Activated naive CD4-positive, alpha-beta T cell treated with anti-CD3 and anti-CD28 coated beads for 36 hours (primary cell): ENCODE measurements at regions of chr4 and their contacts with region 1.

Region 1: GRCh38 chr4:74675673-74676279 is 118.5 kb downstream of the BTC start:
- DNase-seq: peak; percentile 19
- H3K4me3 Mint-ChIP-seq: no peak overlapping the region
- H3K27ac Mint-ChIP-seq: no peak overlapping the region
- H3K4me1 Mint-ChIP-seq: peaks cover 4% of the 10 kb centered on the region
- H3K27me3 Mint-ChIP-seq: peaks cover 5% of the 10 kb centered on the region

Region 2: GRCh38 chr4:74189331-74190043 is 486.3 kb before region 1 on chr4:
- CTCF ChIA-PET with region 1: no interaction called
- intact Hi-C with region 1: loop called (anchors 1 kb)
- DNase-seq: no peak
- H3K4me3 Mint-ChIP-seq: no peak overlapping the region
- H3K27ac Mint-ChIP-seq: no peak overlapping the region
- H3K4me1 Mint-ChIP-seq: no peaks in the 10 kb centered on the region
- H3K27me3 Mint-ChIP-seq: no peaks in the 10 kb centered on the region

Region 3: GRCh38 chr4:74228691-74229640 is 446.8 kb before region 1 on chr4:
- CTCF ChIA-PET with region 1: interaction called, 6 read pairs
- intact Hi-C with region 1: loop called (anchors 1 kb)
- DNase-seq: peak; percentile 88
- H3K4me3 Mint-ChIP-seq: no peak overlapping the region
- H3K27ac Mint-ChIP-seq: no peak overlapping the region
- H3K4me1 Mint-ChIP-seq: peaks cover 3% of the 10 kb centered on the region
- H3K27me3 Mint-ChIP-seq: no peaks in the 10 kb centered on the region

Region 4: GRCh38 chr4:74320559-74321118 is 355.1 kb before region 1 on chr4:
- CTCF ChIA-PET with region 1: interaction called, 28 read pairs
- intact Hi-C with region 1: loop called (anchors 1 kb)
- DNase-seq: peak; percentile 56
- H3K4me3 Mint-ChIP-seq: no peak overlapping the region
- H3K27ac Mint-ChIP-seq: no peak overlapping the region
- H3K4me1 Mint-ChIP-seq: no peaks in the 10 kb centered on the region
- H3K27me3 Mint-ChIP-seq: peaks cover 19% of the 10 kb centered on the region

Region 5: GRCh38 chr4:74370912-74371311 is 304.9 kb before region 1 on chr4:
- CTCF ChIA-PET with region 1: interaction called, 44 read pairs
- intact Hi-C with region 1: loop called (anchors 1 kb)
- DNase-seq: peak; percentile 53
- H3K4me3 Mint-ChIP-seq: no peak overlapping the region
- H3K27ac Mint-ChIP-seq: no peak overlapping the region
- H3K4me1 Mint-ChIP-seq: no peaks in the 10 kb centered on the region
- H3K27me3 Mint-ChIP-seq: peaks cover 25% of the 10 kb centered on the region

Region 6: DNA sequence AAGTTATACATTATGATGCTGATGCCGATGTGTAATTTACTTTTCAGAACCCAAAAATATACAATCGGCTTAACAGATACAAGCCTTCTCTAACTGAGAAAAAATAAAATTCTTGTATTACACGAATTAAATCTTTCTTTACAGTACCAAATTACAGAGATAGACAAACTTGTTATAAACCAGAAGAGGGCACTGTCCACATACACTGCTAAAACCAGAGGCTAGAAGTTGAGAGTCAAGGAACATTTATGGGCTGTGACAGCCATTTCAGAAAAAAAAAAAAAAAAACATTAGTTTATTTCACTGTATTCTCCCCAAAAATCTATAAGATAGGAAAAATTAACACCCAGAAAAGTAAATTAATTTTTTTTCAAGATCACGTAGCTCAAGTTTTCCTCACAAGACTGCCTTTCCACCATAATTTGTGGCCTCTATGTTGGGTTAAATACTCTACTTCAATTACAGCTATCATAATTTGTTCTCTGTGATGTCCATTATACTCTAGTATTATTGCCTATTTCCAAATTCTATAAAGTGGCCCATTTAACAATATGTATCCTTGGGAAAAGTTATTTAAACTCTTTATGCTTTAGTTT is 298.8 kb before region 1 on chr4:
- CTCF ChIA-PET with region 1: interaction called, 44 read pairs
- intact Hi-C with region 1: loop called (anchors 1 kb)
- DNase-seq: no peak
- H3K4me3 Mint-ChIP-seq: no peak overlapping the region
- H3K27ac Mint-ChIP-seq: no peak overlapping the region
- H3K4me1 Mint-ChIP-seq: no peaks in the 10 kb centered on the region
- H3K27me3 Mint-ChIP-seq: peaks cover 4% of the 10 kb centered on the region